Activated naive CD4-positive, alpha-beta T cell treated with anti-CD3 and anti-CD28 coated beads for 36 hours (primary cell): ENCODE measurements at regions of chr12 and their contacts with region 1.

Region 1: DNA sequence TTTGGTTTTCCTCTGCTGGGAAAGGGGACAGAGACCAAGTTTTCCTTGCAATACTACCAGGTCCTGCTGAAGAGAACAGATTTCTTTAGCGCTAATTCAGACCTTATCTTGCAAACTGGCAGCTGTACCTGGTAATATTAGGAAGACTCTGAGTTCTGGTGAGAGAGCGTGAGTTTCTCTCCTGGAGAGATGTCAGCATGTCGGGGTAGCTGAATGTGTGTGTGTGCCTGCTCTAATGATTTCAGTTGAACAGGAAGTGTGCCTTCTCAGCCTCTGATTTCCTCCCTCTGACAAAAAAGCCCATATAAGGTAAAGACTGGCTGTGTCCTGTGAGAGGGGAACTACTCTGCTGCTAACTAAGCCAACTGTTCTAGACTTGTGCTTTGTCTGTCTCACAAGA is 10.3 kb upstream of the ERP27 start:
- DNase-seq: peak; percentile 73
- H3K4me3 Mint-ChIP-seq: peak overlapping the region; percentile 71
- H3K27ac Mint-ChIP-seq: peak overlapping the region; percentile 95
- H3K4me1 Mint-ChIP-seq: peaks cover 82% of the 10 kb centered on the region
- H3K27me3 Mint-ChIP-seq: no peaks in the 10 kb centered on the region

Region 2: GRCh38 chr12:14769969-14770495 is 178.6 kb before region 1 on chr12:
- CTCF ChIA-PET with region 1: no interaction called
- intact Hi-C with region 1: loop called (anchors 1 kb)
- DNase-seq: peak; percentile 89
- H3K4me3 Mint-ChIP-seq: peak overlapping the region; percentile 97
- H3K27ac Mint-ChIP-seq: peak overlapping the region; percentile 98
- H3K4me1 Mint-ChIP-seq: peaks cover 38% of the 10 kb centered on the region
- H3K27me3 Mint-ChIP-seq: no peaks in the 10 kb centered on the region

Region 3: GRCh38 chr12:14824012-14824634 is 124.5 kb before region 1 on chr12:
- CTCF ChIA-PET with region 1: no interaction called
- intact Hi-C with region 1: no loop called
- DNase-seq: no peak
- H3K4me3 Mint-ChIP-seq: no peak overlapping the region
- H3K27ac Mint-ChIP-seq: no peak overlapping the region
- H3K4me1 Mint-ChIP-seq: peaks cover 22% of the 10 kb centered on the region
- H3K27me3 Mint-ChIP-seq: peaks cover 1% of the 10 kb centered on the region

Region 4: GRCh38 chr12:14910090-14910915 is 38.4 kb before region 1 on chr12:
- CTCF ChIA-PET with region 1: no interaction called
- intact Hi-C with region 1: loop called (anchors 1 kb)
- DNase-seq: peak; percentile 59
- H3K4me3 Mint-ChIP-seq: peak overlapping the region; percentile 22
- H3K27ac Mint-ChIP-seq: peak overlapping the region; percentile 90
- H3K4me1 Mint-ChIP-seq: peaks cover 44% of the 10 kb centered on the region
- H3K27me3 Mint-ChIP-seq: no peaks in the 10 kb centered on the region

Region 5: GRCh38 chr12:14981049-14981448 is 32.4 kb after region 1 on chr12:
- CTCF ChIA-PET with region 1: no interaction called
- intact Hi-C with region 1: loop called (anchors 5 kb)
- DNase-seq: no peak
- H3K4me3 Mint-ChIP-seq: no peak overlapping the region
- H3K27ac Mint-ChIP-seq: no peak overlapping the region
- H3K4me1 Mint-ChIP-seq: peaks cover 65% of the 10 kb centered on the region
- H3K27me3 Mint-ChIP-seq: no peaks in the 10 kb centered on the region

Region 6: DNA sequence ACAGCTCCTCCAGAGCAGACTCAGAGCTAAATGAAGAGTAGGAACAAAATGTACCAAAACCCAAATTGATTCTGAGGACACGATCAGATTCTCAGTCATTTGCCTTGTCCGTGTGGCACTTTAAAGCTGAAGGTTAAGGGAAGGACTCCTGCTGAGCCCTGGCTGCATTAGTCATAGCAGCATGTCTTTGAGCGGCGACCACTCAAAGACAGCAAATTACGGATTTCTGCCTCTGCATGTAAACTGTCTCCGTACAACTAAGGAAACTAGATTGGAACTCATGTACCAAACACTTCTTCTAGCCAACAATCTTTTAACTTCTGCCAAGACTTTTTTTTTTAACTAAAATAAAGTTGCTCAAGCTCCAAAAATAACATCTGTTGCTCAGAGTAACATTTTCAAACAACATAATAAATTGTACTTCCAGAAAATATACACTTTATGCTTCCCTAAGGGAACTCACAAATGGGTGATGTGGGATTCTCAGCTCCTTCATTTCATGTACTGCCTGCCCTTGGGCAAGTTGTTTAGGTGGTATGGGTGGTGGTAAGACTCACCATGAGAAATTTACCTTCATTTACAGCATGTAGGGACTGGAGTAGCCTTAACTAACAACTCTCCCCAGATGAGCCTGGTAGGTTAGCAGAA is 216.5 kb after region 1 on chr12:
- CTCF ChIA-PET with region 1: no interaction called
- intact Hi-C with region 1: no loop called
- DNase-seq: no peak
- H3K4me3 Mint-ChIP-seq: no peak overlapping the region
- H3K27ac Mint-ChIP-seq: no peak overlapping the region
- H3K4me1 Mint-ChIP-seq: no peaks in the 10 kb centered on the region
- H3K27me3 Mint-ChIP-seq: no peaks in the 10 kb centered on the region

Region 7: DNA sequence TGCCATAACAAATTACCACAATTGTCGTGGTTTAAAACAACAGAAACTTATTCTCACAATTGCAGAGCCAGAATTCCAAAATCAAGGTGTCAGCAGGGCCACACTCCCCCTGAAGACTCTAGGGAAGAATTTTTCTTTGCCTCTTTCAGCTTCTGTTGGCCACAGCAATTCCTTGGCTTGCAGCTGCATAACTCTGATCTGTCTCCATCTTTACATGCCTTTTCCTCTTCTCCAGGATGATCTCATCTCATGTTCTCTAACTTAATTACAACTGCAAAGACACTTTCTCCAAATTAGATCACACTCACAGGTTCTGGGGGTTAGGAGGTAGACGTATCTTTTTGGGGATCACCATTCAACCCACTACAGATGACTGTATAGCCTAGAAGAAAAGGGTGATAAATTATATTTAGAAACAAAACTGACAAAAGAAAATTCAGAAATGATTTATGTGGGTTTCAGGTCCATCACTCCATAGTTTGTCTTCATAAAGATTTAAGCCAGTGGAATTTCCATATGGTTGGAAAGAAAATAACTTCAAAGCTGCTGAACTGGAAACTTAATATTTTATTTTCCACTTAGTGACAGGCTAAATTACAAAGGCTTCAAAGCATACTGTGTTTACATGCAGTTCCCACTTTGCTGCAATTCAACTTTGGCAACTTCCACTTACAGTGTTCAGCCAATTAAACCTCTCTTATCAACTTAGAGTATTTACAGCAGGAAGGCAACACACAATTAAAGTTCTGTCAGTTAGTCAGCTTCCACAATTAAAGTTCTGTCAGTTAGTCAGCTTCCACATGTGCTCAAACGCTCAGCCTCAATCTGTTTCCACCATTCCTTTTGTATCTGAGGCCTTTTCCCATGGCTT is 627.2 kb after region 1 on chr12:
- CTCF ChIA-PET with region 1: no interaction called
- intact Hi-C with region 1: loop called (anchors 1 kb)
- DNase-seq: no peak
- H3K4me3 Mint-ChIP-seq: no peak overlapping the region
- H3K27ac Mint-ChIP-seq: peak overlapping the region; percentile 48
- H3K4me1 Mint-ChIP-seq: peaks cover 53% of the 10 kb centered on the region
- H3K27me3 Mint-ChIP-seq: no peaks in the 10 kb centered on the region